Right lobe of liver (tissue), 6 donors: ENCODE measurements at regions of chr5 and their contacts with region 1.

Region 1: GRCh38 chr5:36438765-36439561 is 137.3 kb upstream of the RANBP3L start:
- DNase-seq: no peak
- ATAC-seq: no peak
- H3K4me3 ChIP-seq: no peak overlapping the region
- H3K27ac ChIP-seq: no peak overlapping the region
- H3K4me1 ChIP-seq: no peaks in the 10 kb centered on the region
- H3K27me3 ChIP-seq: no peaks in the 10 kb centered on the region
- CTCF ChIP-seq: no peak
- POLR2A ChIP-seq: no peak

Region 2: GRCh38 chr5:36125868-36126267 is 313.1 kb before region 1 on chr5:
- intact Hi-C with region 1: no loop called
- DNase-seq: no peak
- ATAC-seq: no peak
- H3K4me3 ChIP-seq: no peak overlapping the region
- H3K27ac ChIP-seq: no peak overlapping the region
- H3K4me1 ChIP-seq: no peaks in the 10 kb centered on the region
- H3K27me3 ChIP-seq: no peaks in the 10 kb centered on the region
- CTCF ChIP-seq: no peak
- POLR2A ChIP-seq: no peak

Region 3: GRCh38 chr5:36285837-36286615 is 152.9 kb before region 1 on chr5:
- intact Hi-C with region 1: no loop called
- DNase-seq: no peak
- ATAC-seq: peak in 1 of 4 donors; percentile 42
- H3K4me3 ChIP-seq: no peak overlapping the region
- H3K27ac ChIP-seq: no peak overlapping the region
- H3K4me1 ChIP-seq: no peaks in the 10 kb centered on the region
- H3K27me3 ChIP-seq: no peaks in the 10 kb centered on the region
- CTCF ChIP-seq: no peak
- POLR2A ChIP-seq: no peak

Region 4: GRCh38 chr5:36494756-36495601 is 56.0 kb after region 1 on chr5:
- intact Hi-C with region 1: loop called in 1 of 2 experiments (anchors 10 kb)
- DNase-seq: no peak
- ATAC-seq: no peak
- H3K4me3 ChIP-seq: no peak overlapping the region
- H3K27ac ChIP-seq: no peak overlapping the region
- H3K4me1 ChIP-seq: no peaks in the 10 kb centered on the region
- H3K27me3 ChIP-seq: no peaks in the 10 kb centered on the region
- CTCF ChIP-seq: no peak
- POLR2A ChIP-seq: no peak